ENCODE measurements at regions of chr10 and their contacts with region 1.

Region 1: DNA sequence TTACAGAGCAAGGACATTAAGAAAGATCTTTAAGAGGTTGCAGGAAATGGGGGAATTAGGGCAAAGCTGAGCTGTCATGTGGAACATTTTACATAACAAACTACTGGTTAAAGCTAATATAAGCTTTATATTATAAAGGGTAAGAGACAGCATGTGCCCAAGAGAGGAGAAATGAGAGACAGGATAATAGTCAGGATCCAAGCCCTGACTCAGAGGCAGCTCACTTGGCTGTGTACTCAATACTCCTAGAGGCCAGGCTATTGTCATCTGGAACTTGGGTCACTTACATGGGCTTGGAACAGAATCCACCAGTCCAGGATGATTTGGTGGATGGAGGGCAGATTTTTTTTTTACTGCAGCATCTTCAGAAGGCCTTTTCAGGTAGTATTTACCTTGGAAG is 418.6 kb upstream of the ZMIZ1 start:
- DNase-seq: no peak
- H3K4me3 ChIP-seq: no peak overlapping the region
- H3K27ac ChIP-seq: no peak overlapping the region
- H3K4me1 ChIP-seq: no peaks in the 10 kb centered on the region
- H3K27me3 ChIP-seq: no peaks in the 10 kb centered on the region
- CTCF ChIP-seq: no peak

Region 2: DNA sequence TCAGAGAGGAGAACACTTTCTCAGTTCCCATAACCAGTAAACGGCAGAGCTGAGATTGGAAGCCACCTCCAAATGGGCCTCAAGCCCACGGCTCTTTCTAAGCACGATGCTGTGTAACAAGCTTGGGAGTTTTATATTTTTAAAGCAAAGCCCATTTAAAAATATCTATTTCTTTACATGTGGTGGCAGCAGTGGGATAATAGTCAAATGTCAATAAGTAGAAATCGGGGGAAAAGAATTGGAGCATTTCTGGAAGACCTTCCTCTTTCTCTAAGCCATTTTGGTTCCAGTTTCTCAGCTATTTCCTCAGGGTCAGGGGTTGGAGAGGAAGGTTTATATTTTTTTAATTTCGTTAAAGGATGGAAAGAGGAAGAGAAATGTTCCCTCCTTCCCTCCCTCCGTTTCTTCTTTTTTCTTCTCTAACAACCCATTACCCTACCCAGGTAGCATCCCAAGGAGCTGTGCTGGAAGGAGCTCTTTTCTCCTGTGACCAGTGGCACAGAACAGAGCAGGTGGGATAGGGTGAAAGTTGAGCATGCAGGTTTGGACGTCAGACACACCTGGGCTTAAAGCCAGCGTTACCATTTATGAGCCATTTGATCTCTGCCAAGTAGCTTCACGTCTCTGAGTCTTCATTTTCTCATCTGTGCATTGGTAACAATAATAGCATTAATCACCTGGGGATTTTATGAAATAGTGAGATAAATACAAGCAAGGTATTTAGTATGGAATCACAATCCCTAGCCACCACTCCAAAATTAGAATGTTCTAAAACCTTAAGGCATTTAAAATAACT is 100.8 kb before region 1 on chr10:
- CTCF ChIA-PET with region 1: no interaction called
- dilution Hi-C with region 1: loop called (anchors 5 kb)
- in situ Hi-C with region 1: no loop called
- intact Hi-C with region 1: no loop called
- DNase-seq: no peak
- H3K4me3 ChIP-seq: no peak overlapping the region
- H3K27ac ChIP-seq: no peak overlapping the region
- H3K4me1 ChIP-seq: no peaks in the 10 kb centered on the region
- H3K27me3 ChIP-seq: peaks cover 8% of the 10 kb centered on the region
- CTCF ChIP-seq: no peak

Region 3: DNA sequence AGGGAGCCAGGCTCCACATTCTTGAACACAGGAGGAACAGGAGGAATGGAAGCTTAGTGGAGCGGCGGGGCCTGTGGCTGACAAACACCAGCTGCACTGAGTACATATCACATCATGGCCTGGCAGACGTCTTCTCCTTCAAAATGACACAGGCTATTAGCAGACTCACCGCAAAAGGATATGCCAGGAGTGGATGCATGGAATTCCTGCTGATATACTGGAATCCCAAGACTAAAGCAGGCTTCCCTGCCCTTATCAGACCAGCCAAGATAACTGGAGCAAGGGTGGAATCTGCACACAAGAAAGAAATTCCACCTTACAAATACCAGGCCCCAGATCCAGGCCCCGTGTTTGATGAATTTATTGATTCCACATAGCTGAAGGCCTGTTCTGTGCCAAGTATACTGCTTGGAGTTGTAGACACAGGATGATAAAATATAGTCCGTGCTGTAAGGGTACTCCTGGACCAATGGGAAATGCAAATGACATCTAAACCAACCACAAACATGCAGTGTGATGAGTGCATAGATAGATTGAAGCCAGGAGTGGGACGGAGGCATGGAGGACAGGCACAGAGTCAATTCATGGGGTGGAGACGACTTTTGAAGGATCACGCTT is 61.8 kb before region 1 on chr10:
- CTCF ChIA-PET with region 1: no interaction called
- dilution Hi-C with region 1: loop called (anchors 5 kb)
- in situ Hi-C with region 1: no loop called
- intact Hi-C with region 1: no loop called
- DNase-seq: no peak
- H3K4me3 ChIP-seq: no peak overlapping the region
- H3K27ac ChIP-seq: no peak overlapping the region
- H3K4me1 ChIP-seq: no peaks in the 10 kb centered on the region
- H3K27me3 ChIP-seq: no peaks in the 10 kb centered on the region
- CTCF ChIP-seq: no peak

Region 4: GRCh38 chr10:78727728-78728127 is 77.6 kb after region 1 on chr10:
- CTCF ChIA-PET with region 1: no interaction called
- dilution Hi-C with region 1: loop called (anchors 5 kb)
- in situ Hi-C with region 1: no loop called
- intact Hi-C with region 1: no loop called
- DNase-seq: no peak
- H3K4me3 ChIP-seq: no peak overlapping the region
- H3K27ac ChIP-seq: no peak overlapping the region
- H3K4me1 ChIP-seq: no peaks in the 10 kb centered on the region
- H3K27me3 ChIP-seq: no peaks in the 10 kb centered on the region
- CTCF ChIP-seq: no peak

Measured in mammary epithelial cell (primary cell).